Heart right ventricle (tissue), 16 donors: ENCODE measurements at regions of chr6 and their contacts with region 1.

Region 1: DNA sequence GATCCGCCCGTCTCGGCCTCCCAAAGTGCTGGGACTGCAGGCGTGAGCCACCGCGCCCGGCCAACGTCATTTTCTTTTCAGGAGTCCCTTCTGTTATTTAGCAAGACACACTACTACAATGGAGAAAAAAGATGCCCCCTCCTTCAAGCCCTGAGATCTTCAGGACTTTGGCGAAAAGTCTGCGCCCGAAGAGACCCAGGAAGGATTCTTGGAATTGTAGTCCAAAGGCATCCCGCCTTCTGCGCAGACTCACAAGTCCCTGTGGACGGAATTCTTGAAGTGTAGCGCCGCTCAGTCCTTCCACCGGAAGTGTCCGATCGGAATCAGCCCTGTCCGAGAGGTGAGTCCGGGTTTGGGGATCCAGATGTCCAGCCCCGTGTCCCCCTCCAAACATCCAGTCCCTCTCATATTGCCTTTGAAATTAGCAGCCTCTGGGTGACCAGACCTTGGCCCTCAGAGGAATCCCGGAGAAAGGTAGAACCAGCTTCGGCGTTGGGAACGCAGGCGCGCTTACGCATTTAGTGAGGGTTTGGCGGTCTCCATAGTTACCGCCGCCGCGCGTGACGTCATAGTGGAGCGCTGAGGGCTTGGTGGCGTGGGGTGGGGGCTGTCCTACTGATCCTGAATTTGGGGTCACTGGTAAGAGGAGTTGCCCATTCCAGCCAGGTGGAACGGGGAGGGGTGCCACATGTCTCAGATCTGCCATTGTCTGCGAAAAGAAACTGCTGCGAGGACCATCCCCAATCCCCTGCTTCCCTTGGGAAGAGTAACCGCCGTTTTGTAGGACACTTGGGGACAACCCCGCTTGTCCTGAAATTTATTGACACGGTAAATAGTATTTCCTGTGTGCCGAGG is 490 bp downstream of the ZNF165 start:
- DNase-seq: peak; percentile 91 to 96
- ATAC-seq: peak; percentile 98 to 99 (median 99)
- H3K4me3 ChIP-seq: peak overlapping the region; percentile 58 to 92 (median 74)
- H3K27ac ChIP-seq: peak overlapping the region; percentile 41 to 92 (median 86)
- H3K4me1 ChIP-seq: peaks cover 0 to 15% (median 12%) of the 10 kb centered on the region in 9 donors
- H3K27me3 ChIP-seq: no peaks in the 10 kb centered on the region
- CTCF ChIP-seq: no peak

Region 2: DNA sequence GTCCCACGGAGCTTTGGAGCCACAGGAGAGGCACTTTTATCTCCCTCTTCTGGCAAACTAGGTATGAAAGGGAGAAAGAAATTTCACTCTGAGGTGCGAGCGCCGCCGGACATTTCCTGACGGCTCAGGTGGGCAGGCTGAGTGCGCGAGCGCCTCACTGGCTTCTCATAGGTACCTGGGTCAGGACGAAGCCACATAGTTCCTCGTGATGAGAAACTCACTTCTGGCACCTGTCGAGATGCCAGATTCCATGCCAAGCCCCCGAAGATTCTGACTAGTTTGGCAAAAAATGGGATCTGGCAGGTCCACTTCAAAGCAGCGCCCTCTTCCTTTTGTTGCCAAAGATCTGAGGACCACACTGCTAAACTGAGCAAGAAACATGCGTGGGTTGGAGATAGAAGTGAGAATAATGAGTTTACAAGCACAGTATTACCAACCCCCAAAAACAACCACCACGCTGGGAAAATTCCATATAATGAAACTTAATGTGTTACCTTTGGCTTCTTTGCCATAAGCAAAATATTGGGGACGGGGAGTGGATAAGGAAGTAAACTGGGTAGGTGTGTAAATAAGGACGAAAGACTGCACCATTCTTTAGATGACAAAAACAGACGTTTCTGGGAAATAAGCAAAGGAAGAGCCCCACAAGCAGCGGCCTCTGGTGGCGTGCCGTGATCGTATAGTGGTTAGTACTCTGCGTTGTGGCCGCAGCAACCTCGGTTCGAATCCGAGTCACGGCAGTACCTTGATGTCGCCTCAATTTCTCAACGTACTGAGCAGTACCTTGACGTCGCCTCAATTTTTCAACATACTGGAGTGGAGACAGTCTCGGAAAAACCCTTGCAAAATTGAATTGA is 923.2 kb before region 1 on chr6:
- intact Hi-C with region 1: loop called in 1 of 10 experiments (anchors 10 kb)
- DNase-seq: peak; percentile 62 to 65
- ATAC-seq: peak in 7 of 8 donors; percentile 64 to 92 (median 80)
- H3K4me3 ChIP-seq: peak overlapping the region; percentile 5 to 54 (median 44)
- H3K27ac ChIP-seq: peak overlapping the region in 1 of 10 donors; percentile 11
- H3K4me1 ChIP-seq: peaks cover 0 to 17% (median 9%) of the 10 kb centered on the region in 9 donors
- H3K27me3 ChIP-seq: peaks cover 0 to 18% (median 0%) of the 10 kb centered on the region in 7 donors
- CTCF ChIP-seq: peak in 8 of 9 donors; percentile 7 to 75 (median 60)

Region 3: DNA sequence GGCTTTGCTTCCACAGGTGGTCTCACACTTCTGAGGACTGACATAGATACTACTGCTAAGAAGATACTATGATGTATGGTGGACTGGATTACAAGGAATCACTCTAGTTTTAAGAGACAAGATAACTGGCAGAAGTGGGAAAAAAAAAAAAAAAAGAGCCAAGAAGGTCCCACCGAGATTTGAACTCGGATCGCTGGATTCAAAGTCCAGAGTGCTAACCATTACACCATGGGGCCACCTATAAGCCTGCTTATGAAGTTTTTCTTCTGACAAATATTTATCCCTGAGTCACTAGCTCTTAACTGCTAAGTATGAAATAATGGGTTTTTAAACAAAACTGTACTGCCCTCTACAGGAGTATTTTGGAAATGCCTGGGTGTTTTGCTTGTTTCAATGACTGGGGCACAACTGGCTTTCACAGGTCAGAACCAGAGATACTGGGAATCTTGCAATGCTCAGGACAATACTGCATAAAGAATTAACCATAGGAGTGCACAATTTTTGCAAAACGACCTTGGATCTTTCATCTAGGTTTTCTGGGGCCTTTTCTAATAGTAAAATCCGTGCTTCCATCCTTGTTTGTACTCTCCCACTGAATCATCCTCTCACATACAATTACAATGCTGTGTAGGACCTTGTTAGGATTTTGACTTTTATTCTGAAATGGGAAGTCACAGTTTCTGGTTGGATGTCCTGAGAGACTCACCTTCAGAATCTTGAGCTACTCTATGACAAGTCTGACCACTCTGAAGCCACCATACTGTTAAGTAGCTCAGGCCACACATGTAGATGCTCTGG is 285.0 kb before region 1 on chr6:
- intact Hi-C with region 1: no loop called
- DNase-seq: peak in 1 of 2 donors; percentile 73
- ATAC-seq: peak; percentile 24 to 84 (median 71)
- H3K4me3 ChIP-seq: no peak overlapping the region
- H3K27ac ChIP-seq: no peak overlapping the region
- H3K4me1 ChIP-seq: peaks cover 0 to 26% (median 10%) of the 10 kb centered on the region in 9 donors
- H3K27me3 ChIP-seq: peaks cover 0 to 42% (median 14%) of the 10 kb centered on the region in 7 donors
- CTCF ChIP-seq: peak; percentile 59 to 84 (median 82)

Region 4: GRCh38 chr6:28176373-28176772 is 95.5 kb after region 1 on chr6:
- intact Hi-C with region 1: no loop called
- DNase-seq: no peak
- ATAC-seq: no peak
- H3K4me3 ChIP-seq: no peak overlapping the region
- H3K27ac ChIP-seq: no peak overlapping the region
- H3K4me1 ChIP-seq: no peaks in the 10 kb centered on the region
- H3K27me3 ChIP-seq: peaks cover 0 to 18% (median 7%) of the 10 kb centered on the region in 7 donors
- CTCF ChIP-seq: no peak

Region 5: DNA sequence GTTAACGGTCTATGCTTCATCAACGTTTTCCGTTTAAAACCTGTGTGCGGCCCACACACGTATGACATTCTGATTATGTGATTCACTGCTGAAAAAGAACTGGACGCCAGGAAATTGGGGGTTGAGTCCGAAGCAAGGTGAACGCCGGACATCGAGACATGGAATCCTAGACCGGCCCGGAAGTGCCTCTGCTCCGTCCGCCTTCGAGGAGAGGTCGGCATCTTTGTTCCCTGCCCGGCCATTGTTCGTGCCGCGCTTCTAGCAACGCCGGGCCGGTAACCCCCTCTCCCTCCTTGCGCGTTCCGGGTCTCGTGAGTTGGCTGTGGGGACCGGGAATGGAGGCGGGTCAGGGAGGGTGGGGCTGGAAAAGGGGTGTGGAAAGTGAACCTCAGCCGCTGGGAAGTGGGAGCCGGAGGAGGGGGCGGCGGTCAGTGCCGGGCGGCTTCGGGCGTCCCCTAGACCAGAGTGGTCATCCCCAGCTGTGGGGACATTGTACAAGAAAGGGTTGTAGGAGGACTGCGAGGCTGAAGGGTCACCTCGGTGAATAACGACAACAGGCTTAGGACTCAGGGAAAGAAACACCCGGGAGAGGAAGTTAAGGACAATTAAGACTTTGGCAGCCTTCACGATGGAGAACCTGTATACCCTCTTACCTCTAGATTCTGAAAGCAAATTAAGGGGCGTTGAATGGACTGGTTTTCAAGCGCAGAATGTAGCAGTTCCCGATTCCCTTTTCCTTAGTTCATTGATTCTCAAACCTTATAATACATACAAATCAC is 144.4 kb after region 1 on chr6 and contains the start of gene ZSCAN9:
- intact Hi-C with region 1: loop called in 2 of 10 experiments (anchors 5 kb)
- DNase-seq: peak; percentile 84 to 91
- ATAC-seq: peak; percentile 97 to 99 (median 98)
- H3K4me3 ChIP-seq: peak within 1 kb of the TSS; percentile 41 to 87 (median 78)
- H3K27ac ChIP-seq: peak within 1 kb of the TSS in 9 of 10 donors; percentile 67 to 88 (median 81)
- H3K4me1 ChIP-seq: peaks cover 3 to 29% (median 14%) of the 10 kb centered on the region in 9 donors
- H3K27me3 ChIP-seq: peaks cover 0 to 31% (median 21%) of the 10 kb centered on the region in 7 donors
- CTCF ChIP-seq: no peak
- total RNA-seq, gene ZSCAN9: 6.8 to 11.2 (median 8.8) TPM